ENCODE measurements at regions of chr9 and their contacts with region 1.

Region 1: DNA sequence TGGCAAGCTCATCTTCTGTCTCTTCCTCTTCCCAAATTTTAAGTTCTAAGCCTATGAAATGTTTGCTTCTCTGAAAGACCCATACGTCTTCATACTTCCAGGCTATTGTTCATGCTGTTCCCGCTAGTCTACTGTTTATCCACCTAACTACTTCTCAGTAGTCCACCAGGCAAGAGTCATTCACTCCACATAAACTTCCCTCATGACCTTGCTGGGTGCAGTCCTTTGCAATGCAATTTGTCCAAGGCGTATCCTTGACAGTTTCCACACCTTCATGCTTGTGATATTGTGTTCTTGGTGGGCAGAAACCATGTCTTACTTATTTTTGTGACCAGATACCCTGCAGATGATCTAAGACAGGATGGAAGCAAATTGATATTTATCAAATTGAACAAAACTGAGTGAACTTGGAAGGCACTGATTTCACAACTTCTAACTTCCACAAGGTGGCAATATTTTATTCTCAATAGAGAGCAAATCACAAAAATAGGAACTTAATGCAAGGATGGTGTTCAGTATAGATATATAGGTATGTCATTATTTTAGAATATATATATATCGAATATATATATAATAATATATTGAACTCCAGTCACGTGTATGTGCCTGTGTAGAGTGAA is 30.3 kb downstream of the TYRP1 start:
- DNase-seq: no peak
- ATAC-seq: no peak
- H3K4me3 ChIP-seq: no peak overlapping the region
- H3K4me3 Mint-ChIP-seq: no peak overlapping the region
- H3K27ac ChIP-seq: no peak overlapping the region
- H3K27ac Mint-ChIP-seq: no peak overlapping the region
- H3K4me1 ChIP-seq: no peaks in the 10 kb centered on the region
- H3K4me1 Mint-ChIP-seq: no peaks in the 10 kb centered on the region
- H3K27me3 ChIP-seq: no peaks in the 10 kb centered on the region
- H3K27me3 Mint-ChIP-seq: no peaks in the 10 kb centered on the region
- CTCF ChIP-seq: no peak

Region 2: DNA sequence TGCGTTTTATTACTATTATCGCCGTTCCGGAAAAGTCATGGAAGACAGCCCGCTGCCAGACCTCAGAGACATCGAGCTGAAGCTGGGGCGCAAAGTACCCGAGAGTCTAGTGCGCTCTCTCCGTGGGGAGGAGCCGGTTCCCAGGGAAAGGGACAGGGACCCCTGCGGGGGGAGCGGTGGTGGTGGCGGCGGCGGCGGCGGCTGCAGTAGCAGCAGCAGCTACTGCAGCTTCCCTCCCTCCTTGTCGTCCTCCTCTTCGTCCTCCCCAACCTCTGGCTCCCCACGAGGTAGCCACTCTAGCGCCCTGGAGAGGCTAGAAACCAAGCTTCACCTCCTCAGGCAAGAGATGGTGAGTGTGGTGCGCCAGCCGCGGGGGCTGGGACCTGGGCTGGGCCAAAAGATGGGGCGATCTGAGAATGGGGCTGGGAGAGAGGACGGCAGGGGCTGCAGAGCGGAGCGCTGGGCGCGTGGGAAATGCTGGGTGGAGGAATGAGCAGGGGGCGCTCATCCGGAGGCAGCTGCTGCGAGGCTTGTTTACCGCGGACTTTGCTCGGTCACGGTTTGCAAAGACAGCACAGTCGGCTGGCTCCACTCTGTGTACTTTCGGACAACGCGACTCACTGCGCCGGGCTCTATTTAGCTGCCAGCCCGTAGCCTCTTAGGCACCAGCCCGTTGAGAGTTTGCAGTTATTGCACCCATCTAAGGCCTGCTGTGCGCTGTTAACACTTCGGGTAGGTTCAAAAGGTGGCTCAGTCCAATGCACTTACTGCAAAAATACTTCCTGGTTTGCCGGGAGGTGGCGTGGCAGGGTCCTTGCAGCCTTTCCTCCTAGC is 52.4 kb after region 1 on chr9:
- CTCF ChIA-PET with region 1: no interaction called
- POLR2A ChIA-PET with region 1: no interaction called
- intact Hi-C with region 1: loop called in 1 of 2 experiments (anchors 10 kb)
- DNase-seq: no peak
- ATAC-seq: no peak
- H3K4me3 ChIP-seq: no peak overlapping the region
- H3K4me3 Mint-ChIP-seq: no peak overlapping the region
- H3K27ac ChIP-seq: no peak overlapping the region
- H3K27ac Mint-ChIP-seq: no peak overlapping the region
- H3K4me1 ChIP-seq: no peaks in the 10 kb centered on the region
- H3K4me1 Mint-ChIP-seq: peaks cover 3% of the 10 kb centered on the region
- H3K27me3 ChIP-seq: no peaks in the 10 kb centered on the region
- H3K27me3 Mint-ChIP-seq: peaks cover 17% of the 10 kb centered on the region
- CTCF ChIP-seq: no peak